KBM-7 (cell line): ENCODE measurements at regions of chr13 and their contacts with region 1.

Region 1: DNA sequence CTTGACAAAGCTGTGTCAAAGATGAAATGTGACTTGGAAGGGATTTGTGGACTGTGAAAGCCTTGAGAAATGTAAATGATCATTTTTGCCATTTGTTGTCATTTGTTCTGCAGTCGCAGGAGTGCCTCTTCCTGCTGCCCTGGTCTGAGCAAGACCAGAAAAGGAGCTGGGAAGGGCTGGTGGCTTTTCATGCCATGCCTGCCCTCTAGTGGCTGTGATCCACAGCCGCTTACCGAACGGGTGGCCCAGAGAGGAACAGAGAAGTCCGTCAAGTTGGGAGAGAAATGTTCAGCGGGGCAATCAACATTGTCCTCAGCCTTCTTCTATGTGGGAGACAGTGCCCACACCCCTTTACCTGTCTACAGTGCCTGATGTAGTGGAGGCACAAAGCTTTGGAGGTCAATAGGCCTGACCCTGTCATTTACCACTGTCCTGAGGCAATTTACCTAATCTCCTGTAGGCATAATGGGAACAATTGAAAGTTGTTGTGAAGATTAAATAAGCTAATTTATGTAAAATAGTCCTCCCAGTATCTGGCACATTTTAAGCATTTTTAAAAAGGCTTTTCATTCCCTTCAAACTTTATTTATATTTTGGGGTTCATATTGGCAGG is 224.4 kb downstream of the B3GLCT start:
- DNase-seq: peak; percentile 86

Region 2: GRCh38 chr13:30806784-30807183 is 617.4 kb before region 1 on chr13:
- in situ Hi-C with region 1: no loop called
- DNase-seq: no peak

Region 3: DNA sequence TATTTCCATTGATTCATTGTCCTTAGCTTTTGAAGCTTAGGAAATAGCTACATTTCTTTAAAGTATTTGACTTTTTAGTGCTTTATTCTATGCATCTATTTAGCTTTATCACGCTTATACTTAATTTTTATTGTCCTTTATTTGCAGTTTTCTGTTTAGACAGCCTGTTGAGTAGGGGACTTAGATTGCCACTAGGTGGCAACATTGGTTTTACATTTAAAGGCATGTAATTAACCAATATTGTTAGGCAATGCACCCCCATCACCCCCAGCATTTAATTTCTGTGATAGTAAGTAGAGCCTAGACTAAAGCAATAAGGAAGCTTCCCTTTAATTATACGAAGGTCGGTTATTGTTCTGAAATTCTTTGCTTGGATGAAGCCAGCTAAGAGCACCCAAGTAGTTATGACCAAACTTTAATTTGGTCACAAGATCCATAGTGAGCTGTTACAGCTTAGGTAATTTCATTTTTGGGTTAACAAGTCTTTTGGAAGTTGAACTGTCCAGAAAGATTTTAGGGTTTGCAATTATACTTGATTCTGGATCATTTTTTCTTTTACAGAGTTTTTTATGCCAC is 187.9 kb before region 1 on chr13:
- in situ Hi-C with region 1: loop called (anchors 25 kb)
- DNase-seq: peak; percentile 34